Right ventricle myocardium inferior (tissue), 1 donor: ENCODE measurements at regions of chr6 and their contacts with region 1.

Region 1: DNA sequence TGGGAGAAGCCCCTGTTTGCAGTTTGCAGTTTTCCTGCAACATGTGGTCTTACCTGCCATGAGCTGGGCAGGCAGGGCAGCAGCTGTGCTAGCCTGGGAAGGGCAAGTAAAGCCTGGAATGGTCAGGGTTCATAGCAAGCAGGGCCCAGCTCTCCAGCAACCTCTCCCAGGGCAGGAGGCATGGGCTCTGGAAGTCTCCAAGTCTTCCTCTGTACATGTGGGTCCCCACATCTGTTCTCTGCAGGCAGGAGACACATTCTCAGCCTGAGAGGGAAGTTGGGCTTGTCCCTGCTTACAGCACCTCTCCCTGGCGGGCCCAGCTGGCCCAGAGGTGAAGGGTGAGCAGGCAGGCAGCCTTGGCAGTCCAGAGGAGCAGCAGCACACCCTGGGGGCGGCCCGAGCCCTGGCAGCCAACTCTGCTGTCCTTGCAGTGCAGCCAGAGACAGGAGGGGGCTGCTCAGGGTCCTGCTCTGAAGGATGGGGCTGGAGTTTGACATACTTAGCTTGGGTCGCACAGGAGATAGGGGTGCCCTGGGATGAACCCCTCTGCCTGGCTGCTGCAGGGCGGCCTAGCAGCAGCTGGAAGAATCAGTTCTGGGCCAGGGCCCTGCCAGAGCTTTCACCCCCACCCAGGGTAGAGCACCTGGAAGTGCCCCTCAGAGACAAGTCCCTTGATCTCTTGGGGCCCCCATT is 176.0 kb downstream of the MRPL14 start:
- DNase-seq: peak; percentile 85
- ATAC-seq: peak; percentile 58

Region 2: DNA sequence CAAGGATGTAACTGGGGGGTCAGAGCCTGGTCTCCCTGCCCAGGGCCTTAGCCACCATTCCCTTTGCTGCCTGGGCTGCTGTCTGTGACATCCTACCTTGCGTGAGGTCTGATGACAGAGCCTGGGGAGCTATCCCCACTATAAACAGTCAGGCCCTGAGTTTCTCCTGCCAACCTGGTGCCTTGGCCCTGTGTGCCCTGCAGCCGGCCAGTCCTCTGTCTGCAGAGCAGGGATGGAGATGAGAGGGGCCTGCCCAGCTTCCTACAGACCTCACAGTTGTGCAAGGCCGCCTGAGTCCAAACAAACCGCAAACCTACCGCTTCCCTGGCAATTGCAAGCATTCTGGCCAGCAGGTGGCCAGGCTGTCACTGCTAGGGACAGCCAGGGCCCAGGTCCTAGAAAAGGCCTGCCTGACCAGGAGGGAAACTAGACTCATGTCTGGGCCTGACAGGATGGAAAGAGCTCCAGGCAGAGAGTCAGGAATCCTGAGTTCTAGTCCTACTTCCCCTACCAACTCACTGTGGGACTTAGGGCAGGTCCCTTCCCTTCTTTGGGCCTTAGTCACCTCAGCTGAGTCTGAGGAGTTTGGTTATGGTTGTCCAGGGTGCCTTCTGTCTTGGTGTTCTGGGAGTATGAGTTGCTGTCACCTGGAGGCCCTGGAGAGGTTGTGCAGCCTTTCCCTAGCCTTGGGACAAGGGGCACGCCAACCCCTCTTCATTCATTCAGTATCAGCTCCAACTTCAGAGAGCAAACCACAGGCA is 95.0 kb before region 1 on chr6:
- intact Hi-C with region 1: loop called (anchors 1 kb)
- DNase-seq: no peak
- ATAC-seq: peak; percentile 57

Region 3: GRCh38 chr6:43993881-43994523 is 42.8 kb after region 1 on chr6:
- intact Hi-C with region 1: loop called (anchors 1 kb)
- DNase-seq: no peak
- ATAC-seq: peak; percentile 23

Region 4: GRCh38 chr6:44002593-44003344 is 51.6 kb after region 1 on chr6:
- intact Hi-C with region 1: loop called (anchors 1 kb)
- DNase-seq: peak; percentile 77
- ATAC-seq: peak; percentile 33

Region 5: GRCh38 chr6:44067173-44068139 is 116.2 kb after region 1 on chr6:
- intact Hi-C with region 1: no loop called
- DNase-seq: no peak
- ATAC-seq: no peak